Left colon (tissue), 2 donors: ENCODE measurements at regions of chr11 and their contacts with region 1.

Region 1: DNA sequence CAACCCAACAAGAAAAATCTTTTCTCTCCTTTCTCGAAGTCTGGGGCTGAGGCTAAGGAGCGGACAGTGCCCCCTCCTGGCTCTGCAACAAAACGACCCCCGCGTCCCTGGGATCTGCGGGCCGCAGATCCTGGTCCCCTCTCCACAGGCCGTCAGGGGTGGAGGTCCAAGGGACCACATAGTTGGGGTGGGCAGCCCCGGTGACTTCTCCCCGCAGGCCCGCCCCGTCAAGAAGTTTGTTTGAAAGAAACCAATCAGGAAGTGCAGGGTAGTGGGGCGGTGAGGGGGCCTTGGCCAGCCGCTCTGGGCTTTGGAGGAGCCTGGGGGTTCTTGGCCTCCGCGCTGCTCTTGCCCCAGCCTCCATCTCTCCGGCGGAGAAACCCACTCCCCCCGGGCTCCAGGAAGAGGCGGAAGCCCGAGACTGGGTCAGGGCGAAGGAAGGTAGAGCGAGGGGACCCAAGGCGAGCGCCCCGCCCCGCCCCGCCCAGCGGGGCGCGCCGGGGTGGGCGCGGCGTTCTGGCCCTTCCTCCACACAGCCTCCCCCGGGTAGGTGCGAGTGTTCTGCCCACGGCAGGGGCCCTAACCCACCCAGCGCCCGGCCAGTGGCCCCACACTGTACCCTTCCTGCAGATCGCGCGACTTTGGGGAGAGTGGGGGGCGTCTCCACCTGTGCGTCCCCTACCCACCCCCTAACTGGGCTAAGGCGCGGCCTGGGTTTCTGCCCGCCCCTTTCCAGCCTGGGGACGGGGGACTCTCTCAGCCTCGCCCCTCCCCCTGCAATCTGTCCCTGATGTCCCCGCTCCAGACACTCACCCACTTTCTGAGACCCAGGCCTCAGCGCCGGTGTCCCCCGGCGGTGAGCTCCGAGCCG is 1.3 kb downstream of the TP53I11 start:
- DNase-seq: peak; percentile 58 to 73
- ATAC-seq: peak; percentile 60

Region 2: DNA sequence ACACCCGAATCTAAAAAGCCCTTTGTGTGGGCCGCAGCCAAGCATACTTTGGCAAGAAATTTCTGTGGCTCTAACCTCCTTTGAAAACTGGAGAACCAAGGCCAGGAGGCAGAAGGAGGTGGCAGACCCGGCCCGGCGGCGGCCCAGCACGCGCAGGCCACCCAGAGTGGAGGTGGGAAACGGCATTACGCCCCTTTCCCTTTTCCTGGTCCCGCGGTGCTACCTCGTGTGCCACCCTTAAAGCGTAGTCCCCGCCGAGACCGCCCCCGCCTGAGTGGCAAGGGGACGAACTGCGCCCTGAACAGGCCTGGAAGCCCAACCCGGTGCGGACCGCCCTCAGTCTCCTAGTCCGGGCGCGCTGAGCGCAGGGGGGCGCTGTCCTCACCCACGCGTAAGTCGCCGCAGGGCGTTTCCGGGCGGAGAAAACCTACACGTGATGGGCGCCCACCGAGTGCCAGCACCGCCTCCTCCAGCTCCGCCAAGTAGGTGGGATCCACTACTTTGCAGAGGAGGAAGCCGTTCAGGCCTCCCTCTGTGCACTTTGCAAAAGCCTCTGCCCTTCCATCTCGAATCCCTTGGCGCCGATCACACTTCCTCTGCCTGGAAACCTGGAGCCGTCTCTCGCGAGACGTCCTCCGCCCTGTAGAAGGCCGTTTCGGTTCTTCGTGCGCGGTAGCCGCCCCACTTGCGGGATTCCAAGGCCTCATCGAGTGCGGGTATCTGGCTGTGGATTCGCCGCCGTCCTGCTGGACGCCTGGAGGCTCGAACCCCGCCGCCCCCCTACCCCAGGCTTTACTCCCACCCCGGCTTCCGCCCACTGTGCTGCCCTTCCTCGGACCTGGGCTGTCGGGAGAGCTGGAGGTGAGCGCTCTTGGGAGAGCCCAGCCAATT is 883.3 kb before region 1 on chr11 and contains the start of gene ACCS:
- intact Hi-C with region 1: no loop called
- DNase-seq: peak; percentile 96 to 99
- ATAC-seq: peak; percentile 89
- total RNA-seq, gene ACCS: 17.5 to 28.6 TPM

Region 3: DNA sequence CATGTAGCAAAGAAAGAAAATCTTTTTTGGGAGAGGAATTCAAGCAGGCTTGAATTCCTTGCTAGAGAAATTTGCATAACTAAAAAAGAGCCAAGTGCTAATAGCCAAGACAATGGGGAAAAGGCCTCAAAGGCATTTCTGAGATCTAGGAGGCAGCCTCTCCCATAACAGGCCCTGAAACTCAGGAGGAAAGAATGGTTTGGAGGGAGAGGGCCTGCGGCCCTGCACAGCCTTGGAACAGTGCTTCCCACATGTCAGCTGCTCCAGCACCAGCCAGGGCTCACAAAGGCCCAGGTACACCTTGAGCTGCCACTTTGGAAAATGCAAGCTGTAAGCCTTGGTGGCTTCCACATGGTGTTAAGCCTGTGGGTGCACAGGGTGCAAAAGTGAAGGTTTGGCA is 278.2 kb before region 1 on chr11:
- intact Hi-C with region 1: no loop called
- DNase-seq: no peak
- ATAC-seq: no peak

Region 4: GRCh38 chr11:44886790-44887140 is 62.6 kb before region 1 on chr11:
- intact Hi-C with region 1: no loop called
- DNase-seq: no peak
- ATAC-seq: no peak

Region 5: DNA sequence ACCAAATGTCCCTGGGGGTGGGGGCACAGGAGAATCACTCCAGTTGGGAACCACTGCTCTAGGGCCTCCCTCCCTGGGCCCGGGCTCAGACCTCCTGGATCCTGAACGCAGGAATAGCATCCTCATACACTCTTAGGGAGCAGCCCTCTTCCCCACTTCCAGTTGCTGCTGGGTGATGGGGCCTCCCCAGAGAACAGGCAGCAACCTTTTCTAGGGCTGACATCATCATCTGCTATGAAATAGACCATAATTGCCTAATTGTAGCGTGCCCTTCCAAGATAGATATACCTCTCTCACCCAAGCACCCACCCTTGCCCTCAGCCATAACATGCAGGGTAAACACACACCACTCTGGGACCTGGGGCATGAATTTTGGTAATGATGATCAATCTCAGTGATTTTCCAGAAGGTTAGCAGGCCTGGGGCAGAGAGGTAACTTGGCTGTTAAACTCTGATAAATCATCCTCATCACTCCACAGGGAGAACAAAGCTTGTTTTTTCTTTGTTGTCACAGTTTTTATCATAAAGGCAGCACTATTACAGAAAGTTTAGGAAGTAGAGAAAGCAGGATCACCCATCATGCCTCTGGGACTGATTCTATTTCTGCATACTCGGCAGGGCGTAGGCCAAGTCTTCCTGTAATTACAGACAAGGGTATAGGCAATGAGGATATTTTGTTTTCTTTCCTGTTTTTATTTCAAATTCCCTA is 108.7 kb after region 1 on chr11:
- intact Hi-C with region 1: no loop called
- DNase-seq: no peak
- ATAC-seq: no peak

Region 6: GRCh38 chr11:45089676-45090499 is 140.5 kb after region 1 on chr11:
- intact Hi-C with region 1: loop called in 1 of 2 experiments (anchors 5 kb)
- DNase-seq: no peak
- ATAC-seq: no peak

Region 7: DNA sequence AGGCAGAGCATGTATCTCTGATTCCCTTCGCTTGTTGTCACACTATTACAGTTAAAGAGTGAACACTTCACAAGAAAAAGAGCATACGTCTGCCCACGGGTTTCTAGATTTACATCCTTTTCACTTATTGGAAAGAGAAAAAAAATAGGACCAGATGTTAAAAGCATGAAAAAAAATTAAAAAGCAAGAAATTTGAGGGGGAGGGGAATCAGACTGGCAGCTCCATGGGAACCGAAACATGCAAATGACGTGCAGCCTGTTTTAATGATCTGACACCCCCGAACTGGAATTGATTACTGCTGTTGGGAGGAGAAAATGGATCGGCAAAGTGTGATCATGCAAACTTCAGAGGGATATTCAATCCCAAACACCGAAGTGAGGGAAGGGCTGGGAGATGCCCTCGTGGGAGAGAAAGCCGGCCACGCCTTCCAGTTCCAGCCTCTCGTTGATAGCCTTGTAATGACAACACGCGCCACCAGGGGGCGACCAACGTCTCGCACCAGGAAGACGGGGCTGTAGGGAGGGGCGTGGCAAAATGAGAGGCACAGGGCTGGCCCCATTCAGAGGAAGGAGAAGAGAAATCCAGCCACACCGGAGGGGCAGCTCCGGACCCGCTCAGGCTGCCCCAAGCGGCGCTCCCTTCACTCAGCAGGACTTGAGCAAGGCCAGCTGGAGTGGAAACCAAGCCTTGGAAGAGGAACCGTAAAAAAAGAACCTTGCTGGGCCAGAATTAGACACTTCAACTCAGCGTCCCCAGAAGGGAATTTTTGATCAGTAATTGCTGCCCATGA is 390.5 kb after region 1 on chr11:
- intact Hi-C with region 1: loop called in 1 of 2 experiments (anchors 10 kb)
- DNase-seq: peak; percentile 92 to 97
- ATAC-seq: peak; percentile 99